Caco-2 (cell line): ENCODE measurements at regions of chr1 and their contacts with region 1.

Region 1: DNA sequence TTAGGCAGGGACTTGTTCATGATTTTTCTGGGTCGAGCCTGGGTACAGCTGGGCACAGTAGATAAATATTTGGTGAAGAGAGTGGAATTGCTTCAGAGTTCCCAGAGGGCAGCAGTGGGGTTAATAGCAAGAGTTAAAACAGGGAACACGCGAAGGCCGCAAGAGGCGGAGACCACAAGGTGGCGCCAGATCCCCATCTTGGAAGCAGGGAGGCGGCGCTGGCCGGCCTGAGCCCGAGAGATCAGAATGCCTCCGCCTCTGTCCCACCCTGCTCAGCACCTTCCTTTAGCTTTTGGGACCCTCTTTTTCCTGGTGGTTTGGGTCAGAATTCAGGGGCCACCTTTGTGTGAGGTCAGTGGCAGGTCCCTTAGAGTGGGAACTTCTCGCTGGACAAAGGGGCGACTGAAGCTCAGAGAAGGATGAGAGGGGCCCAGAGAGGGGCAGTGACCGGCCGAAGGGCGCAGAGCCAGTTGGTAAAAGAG is 6.5 kb upstream of the PADI2 start:
- DNase-seq: peak; percentile 81 to 87
- H3K4me3 ChIP-seq: no peak overlapping the region
- H3K4me3 Mint-ChIP-seq: no peak overlapping the region
- H3K27ac Mint-ChIP-seq: no peak overlapping the region
- H3K4me1 ChIP-seq: peaks cover 17% of the 10 kb centered on the region
- H3K4me1 Mint-ChIP-seq: peaks cover 6% of the 10 kb centered on the region
- H3K27me3 ChIP-seq: no peaks in the 10 kb centered on the region
- H3K27me3 Mint-ChIP-seq: no peaks in the 10 kb centered on the region
- CTCF ChIP-seq: peak; percentile 90 to 91

Region 2: DNA sequence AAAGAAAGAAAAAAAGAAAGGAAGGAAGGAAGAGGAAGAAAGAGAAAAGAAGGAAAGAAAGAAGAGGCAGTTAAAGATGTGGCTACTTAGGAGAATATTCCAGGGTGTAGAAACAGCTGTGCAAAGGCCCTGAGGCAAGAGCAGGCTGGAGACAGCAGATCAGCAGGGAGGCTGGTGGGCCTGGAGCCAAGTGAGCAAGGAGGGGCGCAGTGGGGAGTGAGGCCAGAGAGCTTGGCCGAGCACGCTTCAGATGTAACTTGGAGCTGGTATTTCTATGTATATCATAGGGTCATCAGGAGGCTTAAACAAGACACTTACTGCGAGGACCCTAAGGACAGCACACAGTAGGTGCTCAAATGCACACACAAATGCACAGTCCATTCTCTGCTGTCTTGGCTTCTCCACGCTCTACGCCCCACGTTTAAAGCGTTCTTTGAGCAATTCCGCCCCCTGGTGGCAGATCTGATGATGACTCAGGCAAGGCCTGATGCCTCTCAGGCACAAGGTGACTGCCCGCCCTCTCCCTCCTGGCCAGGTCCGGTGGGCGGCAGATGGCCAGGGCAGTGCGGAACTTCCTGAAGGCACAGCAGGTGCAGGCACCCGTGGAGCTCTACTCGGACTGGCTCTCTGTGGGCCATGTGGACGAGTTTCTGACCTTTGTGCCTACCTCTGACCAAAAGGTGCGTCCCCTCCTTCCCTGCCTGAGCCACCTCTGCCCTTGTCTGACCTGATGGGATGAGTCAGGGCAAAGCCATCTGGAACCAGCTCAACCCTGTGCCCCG is 111.2 kb after region 1 on chr1:
- CTCF ChIA-PET with region 1: interaction called, 8 read pairs
- POLR2A ChIA-PET with region 1: no interaction called
- intact Hi-C with region 1: loop called (anchors 1 kb)
- DNase-seq: peak; percentile 83 to 90
- H3K4me3 ChIP-seq: no peak overlapping the region
- H3K4me3 Mint-ChIP-seq: no peak overlapping the region
- H3K27ac Mint-ChIP-seq: no peak overlapping the region
- H3K4me1 ChIP-seq: peaks cover 22% of the 10 kb centered on the region
- H3K4me1 Mint-ChIP-seq: no peaks in the 10 kb centered on the region
- H3K27me3 ChIP-seq: no peaks in the 10 kb centered on the region
- H3K27me3 Mint-ChIP-seq: no peaks in the 10 kb centered on the region
- CTCF ChIP-seq: peak; percentile 77 to 79

Region 3: GRCh38 chr1:17274186-17275170 is 148.7 kb after region 1 on chr1:
- CTCF ChIA-PET with region 1: interaction called, 7 read pairs
- POLR2A ChIA-PET with region 1: no interaction called
- intact Hi-C with region 1: loop called (anchors 1 kb)
- DNase-seq: peak; percentile 58 to 64
- H3K4me3 ChIP-seq: no peak overlapping the region
- H3K4me3 Mint-ChIP-seq: no peak overlapping the region
- H3K27ac Mint-ChIP-seq: no peak overlapping the region
- H3K4me1 ChIP-seq: no peaks in the 10 kb centered on the region
- H3K4me1 Mint-ChIP-seq: no peaks in the 10 kb centered on the region
- H3K27me3 ChIP-seq: no peaks in the 10 kb centered on the region
- H3K27me3 Mint-ChIP-seq: no peaks in the 10 kb centered on the region
- CTCF ChIP-seq: peak; percentile 49 to 52

Region 4: GRCh38 chr1:17335821-17336710 is 210.3 kb after region 1 on chr1:
- CTCF ChIA-PET with region 1: interaction called, 6 read pairs
- POLR2A ChIA-PET with region 1: no interaction called
- intact Hi-C with region 1: loop called (anchors 1 kb)
- DNase-seq: peak; percentile 56 to 80
- H3K4me3 ChIP-seq: no peak overlapping the region
- H3K4me3 Mint-ChIP-seq: no peak overlapping the region
- H3K27ac Mint-ChIP-seq: no peak overlapping the region
- H3K4me1 ChIP-seq: no peaks in the 10 kb centered on the region
- H3K4me1 Mint-ChIP-seq: peaks cover 7% of the 10 kb centered on the region
- H3K27me3 ChIP-seq: no peaks in the 10 kb centered on the region
- H3K27me3 Mint-ChIP-seq: peaks cover 18% of the 10 kb centered on the region
- CTCF ChIP-seq: peak; percentile 70 to 89